MCF 10A (cell line): ENCODE measurements at regions of chr2 and their contacts with region 1.

Region 1: GRCh38 chr2:149561309-149561926 is 26.2 kb downstream of the MMADHC start:
- DNase-seq: peak; percentile 51
- H3K4me3 Mint-ChIP-seq: no peak overlapping the region
- H3K27ac Mint-ChIP-seq: no peak overlapping the region
- H3K4me1 Mint-ChIP-seq: no peaks in the 10 kb centered on the region
- H3K27me3 Mint-ChIP-seq: no peaks in the 10 kb centered on the region
- CTCF ChIP-seq: peak; percentile 68

Region 2: GRCh38 chr2:149087751-149088150 is 473.7 kb before region 1 on chr2:
- CTCF ChIA-PET with region 1: interaction called, 3 read pairs
- POLR2A ChIA-PET with region 1: no interaction called
- intact Hi-C with region 1: loop called (anchors 2 kb)
- DNase-seq: peak; percentile 16
- H3K4me3 Mint-ChIP-seq: no peak overlapping the region
- H3K27ac Mint-ChIP-seq: no peak overlapping the region
- H3K4me1 Mint-ChIP-seq: no peaks in the 10 kb centered on the region
- H3K27me3 Mint-ChIP-seq: no peaks in the 10 kb centered on the region
- CTCF ChIP-seq: peak; percentile 36

Region 3: GRCh38 chr2:149313512-149313972 is 247.9 kb before region 1 on chr2:
- CTCF ChIA-PET with region 1: no interaction called
- POLR2A ChIA-PET with region 1: no interaction called
- intact Hi-C with region 1: loop called (anchors 5 kb)
- DNase-seq: peak; percentile 76
- H3K4me3 Mint-ChIP-seq: no peak overlapping the region
- H3K27ac Mint-ChIP-seq: no peak overlapping the region
- H3K4me1 Mint-ChIP-seq: peaks cover 9% of the 10 kb centered on the region
- H3K27me3 Mint-ChIP-seq: peaks cover under 1% of the 10 kb centered on the region
- CTCF ChIP-seq: peak; percentile 53

Region 4: DNA sequence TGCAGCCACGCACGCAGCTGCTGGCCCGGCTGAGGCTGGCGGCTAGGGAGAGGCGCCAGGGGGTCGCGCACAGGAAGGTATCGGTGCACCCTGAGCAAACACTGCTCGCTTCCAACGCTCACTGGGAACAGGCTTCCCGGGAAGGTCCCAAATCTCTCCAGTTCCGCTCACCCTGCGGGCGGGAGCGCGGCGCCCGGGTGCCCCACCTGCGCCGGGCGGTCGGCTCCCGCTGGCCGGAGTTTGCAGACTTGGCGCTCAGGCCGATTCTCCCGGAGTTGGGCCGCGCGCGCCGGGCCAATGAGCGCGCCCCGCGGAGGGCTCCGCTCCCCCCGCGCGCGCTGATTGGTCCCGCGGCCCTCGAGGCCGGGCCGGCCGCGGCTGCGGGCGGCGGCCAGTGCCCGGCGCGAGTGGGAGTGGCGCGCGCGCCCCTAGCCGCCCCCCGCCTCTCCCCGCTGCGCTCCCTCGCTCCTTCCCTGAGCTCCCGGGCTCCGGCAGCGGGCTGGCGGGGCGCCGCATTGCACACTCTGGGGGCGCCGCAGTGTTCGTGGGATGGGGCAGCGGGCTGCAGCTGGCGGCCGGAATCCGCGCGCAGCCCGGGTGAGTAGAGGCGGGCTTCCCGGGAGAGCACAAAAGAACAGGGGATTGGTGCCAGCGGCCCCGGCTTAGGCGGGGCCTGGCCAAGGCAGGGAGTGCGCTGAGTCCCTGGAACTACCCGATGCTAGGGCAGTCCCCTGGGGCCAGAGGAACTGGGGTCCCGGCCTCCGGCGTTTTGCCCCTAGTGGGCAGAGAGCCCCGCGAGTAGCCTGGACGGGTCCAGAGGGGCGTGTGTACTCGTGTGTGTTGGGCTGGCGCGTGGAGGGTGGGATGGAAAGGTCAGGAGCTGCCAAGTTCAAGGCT is 231.0 kb before region 1 on chr2 and contains the start of gene LYPD6:
- CTCF ChIA-PET with region 1: no interaction called
- POLR2A ChIA-PET with region 1: interaction called, 3 read pairs
- intact Hi-C with region 1: loop called (anchors 1 kb)
- DNase-seq: peak; percentile 80
- H3K4me3 Mint-ChIP-seq: peak within 1 kb of the TSS; percentile 76
- H3K27ac Mint-ChIP-seq: peak within 1 kb of the TSS; percentile 49
- H3K4me1 Mint-ChIP-seq: peaks cover 8% of the 10 kb centered on the region
- H3K27me3 Mint-ChIP-seq: no peaks in the 10 kb centered on the region
- CTCF ChIP-seq: peak; percentile 11
- total RNA-seq, gene LYPD6: 2.0 and 3.2 TPM in 2 replicates

Region 5: DNA sequence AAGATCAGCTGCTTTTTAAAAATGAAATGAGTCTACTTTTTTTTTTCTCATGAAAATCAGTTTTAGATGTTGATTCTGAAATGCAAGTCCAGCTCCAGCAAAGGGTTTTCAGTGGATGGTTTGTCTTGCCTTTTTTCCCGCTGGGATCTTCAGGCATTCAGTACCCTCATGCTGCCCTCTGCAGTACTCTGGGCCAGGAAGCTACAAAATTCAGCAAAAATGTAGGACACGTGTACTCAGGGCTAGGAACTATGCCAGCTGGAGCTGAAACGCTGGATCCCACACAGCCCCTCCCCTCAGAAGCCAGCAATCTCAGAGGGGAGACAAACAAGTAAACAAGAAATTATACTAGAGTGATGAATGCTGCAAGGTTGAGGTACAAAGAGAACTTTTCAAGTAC is 71.1 kb before region 1 on chr2:
- CTCF ChIA-PET with region 1: interaction called, 5 read pairs
- POLR2A ChIA-PET with region 1: no interaction called
- intact Hi-C with region 1: loop called (anchors 2 kb)
- DNase-seq: peak; percentile 12
- H3K4me3 Mint-ChIP-seq: no peak overlapping the region
- H3K27ac Mint-ChIP-seq: no peak overlapping the region
- H3K4me1 Mint-ChIP-seq: no peaks in the 10 kb centered on the region
- H3K27me3 Mint-ChIP-seq: peaks cover 24% of the 10 kb centered on the region
- CTCF ChIP-seq: no peak